CD8-positive, alpha-beta T cell (primary cell): ENCODE measurements at regions of chr21 and their contacts with region 1.

Region 1: GRCh38 chr21:33641336-33642026 is at the start of gene CRYZL1:
- DNase-seq: peak; percentile 100
- ATAC-seq: peak; percentile 78
- H3K4me3 ChIP-seq: peak within 1 kb of the TSS; percentile 83 to 95
- H3K4me3 Mint-ChIP-seq: peak within 1 kb of the TSS; percentile 90
- H3K27ac ChIP-seq: peak within 1 kb of the TSS; percentile 89 to 92
- H3K27ac Mint-ChIP-seq: peak within 1 kb of the TSS; percentile 92
- H3K4me1 ChIP-seq: peaks cover 15% of the 10 kb centered on the region
- H3K4me1 Mint-ChIP-seq: peaks cover 41% of the 10 kb centered on the region
- H3K27me3 ChIP-seq: no peaks in the 10 kb centered on the region
- H3K27me3 Mint-ChIP-seq: peaks cover 7% of the 10 kb centered on the region
- CTCF ChIP-seq: no peak
- total RNA-seq, gene CRYZL1: 19.9 to 21.8 TPM

Region 2: DNA sequence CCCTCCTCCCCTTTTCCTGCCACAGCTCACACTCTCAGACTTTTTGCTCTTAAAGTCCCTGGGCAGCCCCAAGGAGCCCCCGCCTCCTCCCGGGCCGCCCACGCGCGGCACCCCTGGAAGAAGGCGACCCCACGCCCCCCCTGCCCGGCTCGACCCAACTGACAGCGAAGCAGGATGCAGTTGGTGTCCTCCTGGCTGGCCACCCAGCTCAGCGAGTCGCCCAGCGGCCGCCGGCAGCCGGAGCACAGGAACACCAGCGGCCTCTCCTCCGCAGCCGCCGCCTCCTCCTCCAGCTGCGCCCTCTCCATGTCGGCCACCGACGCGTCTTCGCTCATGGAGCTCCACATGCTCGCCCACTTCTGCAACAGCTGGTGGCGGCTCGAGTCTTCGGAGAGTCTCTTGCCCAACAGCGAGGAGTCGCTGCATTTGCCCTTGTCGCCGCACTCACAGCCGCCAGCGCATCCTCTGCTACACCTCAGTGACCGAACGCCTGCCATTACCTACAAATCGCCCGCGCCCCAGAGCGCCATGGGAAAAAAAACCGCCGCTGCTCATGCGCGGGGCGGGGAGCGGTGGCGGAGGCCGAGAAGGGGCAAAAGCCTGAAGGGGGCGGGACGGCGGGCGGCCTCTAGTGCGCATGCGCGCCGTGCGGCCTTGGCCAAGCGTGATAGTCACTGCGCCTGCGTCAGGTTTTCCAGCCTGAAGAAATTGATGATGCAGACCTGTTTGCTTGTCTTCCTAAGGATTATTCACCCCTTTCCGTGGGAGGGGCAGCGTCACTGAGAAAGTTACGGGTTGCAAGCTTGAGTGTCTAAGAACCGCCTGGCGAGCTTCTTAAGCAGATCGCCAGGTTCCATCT is 1362.7 kb before region 1 on chr21 and contains the start of gene MIS18A:
- CTCF ChIA-PET with region 1: no interaction called
- POLR2A ChIA-PET with region 1: no interaction called
- intact Hi-C with region 1: loop called in 1 of 2 experiments (anchors 2 kb)
- DNase-seq: peak; percentile 95 to 99 (median 97)
- ATAC-seq: peak; percentile 95
- H3K4me3 ChIP-seq: peak within 1 kb of the TSS; percentile 67 to 74
- H3K4me3 Mint-ChIP-seq: peak within 1 kb of the TSS; percentile 99
- H3K27ac ChIP-seq: peak within 1 kb of the TSS; percentile 33 to 69
- H3K27ac Mint-ChIP-seq: peak within 1 kb of the TSS; percentile 92
- H3K4me1 ChIP-seq: peaks cover 16% of the 10 kb centered on the region
- H3K4me1 Mint-ChIP-seq: peaks cover 31% of the 10 kb centered on the region
- H3K27me3 ChIP-seq: no peaks in the 10 kb centered on the region
- H3K27me3 Mint-ChIP-seq: no peaks in the 10 kb centered on the region
- CTCF ChIP-seq: no peak
- total RNA-seq, gene MIS18A: 3.7 to 5.1 TPM

Region 3: GRCh38 chr21:32727687-32728455 is 913.6 kb before region 1 on chr21 and contains the start of gene SYNJ1:
- CTCF ChIA-PET with region 1: no interaction called
- POLR2A ChIA-PET with region 1: interaction called, 3 read pairs
- intact Hi-C with region 1: loop called (anchors 1 to 5 kb)
- DNase-seq: peak; percentile 86 to 96 (median 93)
- ATAC-seq: peak; percentile 86
- H3K4me3 ChIP-seq: peak within 1 kb of the TSS; percentile 86 to 99
- H3K4me3 Mint-ChIP-seq: peak within 1 kb of the TSS; percentile 94
- H3K27ac ChIP-seq: peak within 1 kb of the TSS; percentile 76 to 82
- H3K27ac Mint-ChIP-seq: peak within 1 kb of the TSS; percentile 93
- H3K4me1 ChIP-seq: peaks cover 45% of the 10 kb centered on the region
- H3K4me1 Mint-ChIP-seq: peaks cover 61% of the 10 kb centered on the region
- H3K27me3 ChIP-seq: no peaks in the 10 kb centered on the region
- H3K27me3 Mint-ChIP-seq: no peaks in the 10 kb centered on the region
- CTCF ChIP-seq: no peak
- total RNA-seq, gene SYNJ1: 10.5 to 10.7 TPM

Region 4: GRCh38 chr21:33324291-33325221 is 316.9 kb before region 1 on chr21 and contains the start of gene IFNAR1:
- CTCF ChIA-PET with region 1: no interaction called
- POLR2A ChIA-PET with region 1: no interaction called
- intact Hi-C with region 1: loop called in 1 of 2 experiments (anchors 10 kb)
- DNase-seq: peak; percentile 98 to 100 (median 99)
- ATAC-seq: peak; percentile 92
- H3K4me3 ChIP-seq: peak within 1 kb of the TSS; percentile 80 to 92
- H3K4me3 Mint-ChIP-seq: no peak within 1 kb of the TSS
- H3K27ac ChIP-seq: peak within 1 kb of the TSS; percentile 88 to 92
- H3K27ac Mint-ChIP-seq: no peak within 1 kb of the TSS
- H3K4me1 ChIP-seq: peaks cover 31% of the 10 kb centered on the region
- H3K4me1 Mint-ChIP-seq: peaks cover 30% of the 10 kb centered on the region
- H3K27me3 ChIP-seq: no peaks in the 10 kb centered on the region
- H3K27me3 Mint-ChIP-seq: no peaks in the 10 kb centered on the region
- CTCF ChIP-seq: no peak
- total RNA-seq, gene IFNAR1: 15.1 to 18.6 TPM

Region 5: GRCh38 chr21:33542640-33543504 is 98.6 kb before region 1 on chr21 and contains the start of gene SON:
- CTCF ChIA-PET with region 1: no interaction called
- POLR2A ChIA-PET with region 1: interaction called, 3 read pairs
- intact Hi-C with region 1: loop called (anchors 1 kb)
- DNase-seq: peak; percentile 93 to 99 (median 96)
- ATAC-seq: peak; percentile 89
- H3K4me3 ChIP-seq: peak within 1 kb of the TSS; percentile 87 to 88
- H3K4me3 Mint-ChIP-seq: peak within 1 kb of the TSS; percentile 96
- H3K27ac ChIP-seq: peak within 1 kb of the TSS; percentile 99
- H3K27ac Mint-ChIP-seq: peak within 1 kb of the TSS; percentile 99
- H3K4me1 ChIP-seq: peaks cover 44% of the 10 kb centered on the region
- H3K4me1 Mint-ChIP-seq: peaks cover 55% of the 10 kb centered on the region
- H3K27me3 ChIP-seq: no peaks in the 10 kb centered on the region
- H3K27me3 Mint-ChIP-seq: no peaks in the 10 kb centered on the region
- CTCF ChIP-seq: no peak
- total RNA-seq, gene SON: 418 to 422 TPM

Region 6: DNA sequence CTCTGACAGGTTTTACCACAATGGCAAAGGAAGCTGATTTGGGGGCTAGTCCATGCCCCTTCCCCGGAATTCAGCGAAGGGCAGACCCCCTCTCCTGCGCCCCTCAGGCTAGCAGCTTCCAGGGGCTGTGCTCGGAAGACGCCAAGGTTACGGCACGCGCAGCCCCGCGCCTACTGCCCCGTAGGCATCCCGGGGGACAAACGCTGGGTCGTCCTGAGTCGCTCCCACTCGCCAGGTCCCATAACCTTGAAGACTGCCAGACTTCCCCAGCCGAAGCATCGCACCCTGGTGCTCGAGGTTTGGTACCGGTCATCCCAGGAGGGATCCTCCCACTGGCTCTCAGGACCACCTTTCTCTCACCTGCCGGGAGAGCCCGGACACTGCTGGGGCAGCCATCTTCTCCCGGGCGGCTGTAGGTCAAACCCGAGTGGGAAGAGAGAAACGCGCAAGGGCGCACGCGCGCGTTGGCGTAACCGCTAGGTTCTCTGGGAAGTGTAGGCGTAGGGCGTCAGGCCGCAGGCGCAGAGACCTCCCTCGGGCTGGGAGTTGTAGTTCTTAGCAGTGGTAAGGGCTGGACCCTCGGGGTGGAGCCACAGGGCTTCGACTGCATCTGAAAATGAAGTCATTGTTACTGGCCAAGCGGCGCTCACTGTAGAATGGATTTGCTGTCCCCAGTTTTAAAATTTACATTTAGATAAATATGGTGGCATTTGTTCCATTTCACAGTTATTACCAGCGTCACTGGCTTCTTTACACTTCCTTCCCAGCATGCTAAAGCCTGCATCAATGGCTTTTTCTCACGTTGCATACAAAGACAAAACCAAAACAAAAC is 274.1 kb after region 1 on chr21 and contains the start of gene ATP5PO:
- CTCF ChIA-PET with region 1: no interaction called
- POLR2A ChIA-PET with region 1: no interaction called
- intact Hi-C with region 1: loop called (anchors 1 to 2 kb)
- DNase-seq: peak; percentile 91 to 98 (median 96)
- ATAC-seq: peak; percentile 99
- H3K4me3 ChIP-seq: peak within 1 kb of the TSS; percentile 78 to 94
- H3K4me3 Mint-ChIP-seq: peak within 1 kb of the TSS; percentile 97
- H3K27ac ChIP-seq: peak within 1 kb of the TSS; percentile 74 to 82
- H3K27ac Mint-ChIP-seq: peak within 1 kb of the TSS; percentile 94
- H3K4me1 ChIP-seq: peaks cover 18% of the 10 kb centered on the region
- H3K4me1 Mint-ChIP-seq: peaks cover 30% of the 10 kb centered on the region
- H3K27me3 ChIP-seq: no peaks in the 10 kb centered on the region
- H3K27me3 Mint-ChIP-seq: no peaks in the 10 kb centered on the region
- CTCF ChIP-seq: no peak
- total RNA-seq, gene ATP5PO: 129 to 143 TPM